Heart left ventricle (tissue), 16 donors: ENCODE measurements at regions of chr18 and their contacts with region 1.

Region 1: DNA sequence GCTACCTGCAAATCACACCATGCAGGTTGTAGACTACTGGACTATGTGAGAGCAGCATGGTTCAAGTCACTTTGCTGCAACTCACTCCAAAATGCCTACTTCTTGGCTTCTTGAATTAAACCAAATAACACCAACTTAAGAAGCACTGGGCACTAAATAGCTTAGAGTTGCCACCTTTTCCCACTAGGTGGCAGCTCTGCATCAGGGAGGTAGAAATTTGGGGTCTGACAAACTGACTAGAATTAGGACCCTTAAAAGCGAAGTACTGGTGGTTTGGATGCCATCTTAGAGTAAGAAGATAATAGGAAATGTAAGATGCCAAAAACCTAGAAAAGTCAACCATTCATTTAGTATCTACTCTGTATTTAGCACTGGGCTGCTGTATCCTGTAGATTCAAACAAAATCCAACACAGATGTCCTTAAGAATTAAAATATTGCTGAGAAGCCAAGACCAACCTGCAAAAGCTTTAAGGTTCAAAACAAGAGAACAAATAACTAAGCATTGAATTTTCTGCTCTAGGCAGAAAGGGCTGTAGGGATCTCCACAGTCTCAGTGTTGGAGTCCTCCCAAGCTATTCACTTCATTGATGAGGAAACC is 65.5 kb downstream of the CCBE1 start:
- DNase-seq: no peak
- ATAC-seq: no peak
- H3K4me3 ChIP-seq: no peak overlapping the region
- H3K27ac ChIP-seq: peak overlapping the region in 1 of 12 donors; percentile 80
- H3K4me1 ChIP-seq: peaks cover 0 to 6% (median 0%) of the 10 kb centered on the region in 12 donors
- H3K27me3 ChIP-seq: no peaks in the 10 kb centered on the region
- CTCF ChIP-seq: peak; percentile 36 to 65 (median 48)
- POLR2A ChIP-seq: no peak

Region 2: GRCh38 chr18:58947136-58947732 is 684.4 kb before region 1 on chr18:
- intact Hi-C with region 1: no loop called
- DNase-seq: no peak
- ATAC-seq: no peak
- H3K4me3 ChIP-seq: no peak overlapping the region
- H3K27ac ChIP-seq: no peak overlapping the region
- H3K4me1 ChIP-seq: peaks cover 0 to 35% (median 18%) of the 10 kb centered on the region in 12 donors
- H3K27me3 ChIP-seq: no peaks in the 10 kb centered on the region
- CTCF ChIP-seq: no peak
- POLR2A ChIP-seq: no peak

Region 3: DNA sequence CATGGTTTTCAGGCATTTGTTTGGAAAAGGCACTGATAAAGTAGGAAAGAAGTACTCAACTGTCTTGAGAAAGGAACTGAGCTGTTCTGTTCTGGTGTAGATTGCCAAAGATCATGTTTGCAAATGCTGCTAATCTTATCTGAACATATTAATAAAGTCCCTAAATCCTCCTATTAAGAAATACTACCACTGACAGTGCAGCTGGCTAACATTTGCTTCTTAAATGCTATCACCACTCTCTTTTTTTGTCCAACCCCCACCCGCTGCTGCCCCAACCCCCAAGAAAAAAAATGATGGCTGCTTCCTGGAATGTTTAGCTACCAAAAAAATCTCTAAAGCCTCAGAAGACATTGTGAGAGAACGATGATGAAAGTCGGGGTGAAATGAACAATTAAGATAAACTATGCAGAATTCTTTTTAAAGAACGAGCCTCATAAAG is 65.1 kb before region 1 on chr18:
- intact Hi-C with region 1: no loop called
- DNase-seq: no peak
- ATAC-seq: peak in 3 of 4 donors; percentile 48 to 68 (median 58)
- H3K4me3 ChIP-seq: no peak overlapping the region
- H3K27ac ChIP-seq: no peak overlapping the region
- H3K4me1 ChIP-seq: peaks cover 0 to 5% (median 0%) of the 10 kb centered on the region in 12 donors
- H3K27me3 ChIP-seq: no peaks in the 10 kb centered on the region
- CTCF ChIP-seq: no peak
- POLR2A ChIP-seq: no peak

Region 4: DNA sequence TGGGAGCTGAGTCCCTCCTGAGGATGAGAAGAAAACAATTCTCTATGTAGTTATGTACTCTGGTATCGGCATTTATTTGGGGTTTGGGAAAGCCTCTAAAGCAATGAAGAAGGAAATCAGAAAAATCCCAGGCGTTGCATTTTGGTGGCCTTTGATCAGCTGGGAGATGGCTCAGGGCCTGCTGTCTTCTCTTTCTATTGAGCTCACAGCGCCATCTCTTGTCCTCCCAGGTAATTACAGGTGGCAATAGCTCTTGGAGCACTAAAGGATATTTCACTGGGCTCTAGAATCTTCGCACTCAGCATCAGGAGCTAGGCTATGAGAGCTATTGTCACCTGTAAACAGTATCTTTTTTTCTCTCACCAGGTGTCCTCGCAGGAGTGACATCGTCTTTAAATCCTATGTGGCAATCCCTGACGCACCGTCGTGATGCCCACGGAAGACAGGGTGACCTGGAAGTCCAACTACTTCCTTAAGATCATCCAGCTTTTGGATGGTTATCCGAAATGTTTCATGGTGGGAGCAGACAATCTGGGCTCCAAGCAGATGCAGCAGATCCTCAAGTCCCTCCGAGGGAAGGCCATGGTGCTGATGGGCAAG is 192.0 kb after region 1 on chr18:
- intact Hi-C with region 1: loop called (anchors 2 to 10 kb)
- DNase-seq: peak in 4 of 5 donors; percentile 46 to 62 (median 58)
- ATAC-seq: peak; percentile 32 to 80 (median 74)
- H3K4me3 ChIP-seq: no peak overlapping the region
- H3K27ac ChIP-seq: no peak overlapping the region
- H3K4me1 ChIP-seq: peaks cover 0 to 3% (median 0%) of the 10 kb centered on the region in 12 donors
- H3K27me3 ChIP-seq: peaks cover 0 to 7% (median 0%) of the 10 kb centered on the region in 9 donors
- CTCF ChIP-seq: peak; percentile 63 to 83 (median 76)
- POLR2A ChIP-seq: no peak

Region 5: DNA sequence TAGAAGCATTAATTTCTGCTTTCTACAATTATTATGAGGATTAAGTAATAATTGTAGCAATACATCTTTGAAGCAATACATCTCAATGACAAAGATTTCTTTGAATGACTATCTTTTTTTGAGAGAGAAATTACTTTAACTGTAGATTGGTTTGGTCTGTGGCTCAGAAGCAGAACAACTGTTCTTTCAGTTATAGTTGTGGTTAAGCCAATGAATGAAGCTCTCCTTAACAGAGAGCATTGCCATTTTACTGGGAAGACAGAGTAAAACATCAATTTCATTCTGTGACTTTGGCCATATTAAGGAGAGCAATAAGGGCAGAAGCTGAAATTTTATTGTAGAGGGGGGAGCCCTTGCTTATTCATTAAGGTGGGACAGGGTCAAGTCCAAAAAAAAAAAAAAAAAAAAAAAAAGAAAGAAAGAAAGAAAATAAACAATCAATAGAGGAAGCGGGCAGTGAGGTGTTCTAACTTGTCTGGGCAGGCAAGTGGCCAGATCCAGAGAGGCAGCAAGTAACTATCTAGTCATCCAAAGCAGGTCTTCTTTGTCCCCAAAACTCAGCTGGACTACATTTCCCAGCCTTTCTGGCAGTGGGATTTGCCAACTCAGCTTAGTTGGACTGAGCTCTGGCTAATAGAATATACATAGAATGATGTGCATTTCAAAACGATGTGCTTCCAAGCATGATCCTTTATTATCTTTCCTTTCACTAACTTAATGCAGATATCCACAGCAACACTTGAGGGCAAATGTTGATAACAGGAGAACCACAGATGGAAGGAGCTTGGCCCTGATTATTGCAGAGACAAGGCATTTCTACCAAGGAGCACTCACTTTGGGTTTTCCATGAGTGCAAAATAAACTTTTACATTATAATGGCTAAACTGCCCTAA is 1238.8 kb after region 1 on chr18:
- intact Hi-C with region 1: no loop called
- DNase-seq: no peak
- ATAC-seq: no peak
- H3K4me3 ChIP-seq: no peak overlapping the region
- H3K27ac ChIP-seq: no peak overlapping the region
- H3K4me1 ChIP-seq: no peaks in the 10 kb centered on the region
- H3K27me3 ChIP-seq: no peaks in the 10 kb centered on the region
- CTCF ChIP-seq: no peak
- POLR2A ChIP-seq: no peak